Activated T-helper 2 cell treated with anti-CD3 and anti-CD28 coated beads, Interferon-gamma antibody, Interleukin-2, Interleukin-4, amounts not matched to agents 10 μg/mL and 5 μg/mL and 100 μg/mL, durations not matched to agents 14 hours and 24 hours and 36 hours (primary cell): ENCODE measurements at regions of chr3 and their contacts with region 1.

Region 1: GRCh38 chr3:15636003-15636709 is 34.6 kb downstream of the BTD start:
- DNase-seq: no peak
- H3K4me3 Mint-ChIP-seq: peak overlapping the region; percentile 56
- H3K27ac Mint-ChIP-seq: peak overlapping the region; percentile 87
- H3K4me1 Mint-ChIP-seq: peaks cover 59% of the 10 kb centered on the region
- H3K27me3 Mint-ChIP-seq: no peaks in the 10 kb centered on the region

Region 2: DNA sequence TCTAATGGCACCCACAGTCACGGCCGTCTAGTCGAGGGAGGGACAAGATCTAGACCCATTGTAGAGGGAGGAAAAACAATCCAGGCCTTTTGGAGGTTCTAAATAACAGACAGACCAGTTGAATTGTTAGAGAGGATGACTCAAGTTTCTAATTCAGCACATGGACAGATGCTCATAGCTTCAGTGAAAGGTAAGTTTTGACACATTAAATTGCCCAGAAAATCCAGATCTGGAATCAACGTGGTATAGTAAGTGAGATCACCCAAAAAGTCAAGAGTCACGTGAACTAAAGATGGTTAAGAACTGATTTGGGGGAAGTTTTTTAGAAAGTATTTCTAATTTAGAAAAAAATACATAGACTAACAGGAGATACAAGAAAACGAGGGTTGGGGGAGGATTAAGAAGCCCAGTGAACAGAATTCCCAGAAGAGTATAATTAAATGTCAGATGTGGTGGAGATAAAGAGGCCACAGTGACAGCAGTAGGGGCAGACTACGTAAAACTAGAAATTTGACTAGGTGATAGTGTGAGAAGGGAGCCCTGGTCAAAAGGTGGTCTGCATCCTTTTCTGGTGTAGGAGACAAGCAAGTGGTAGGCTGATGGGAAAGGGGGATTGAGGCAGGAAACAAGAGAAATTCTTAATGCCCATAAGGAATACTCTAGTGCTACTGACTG is 383.0 kb before region 1 on chr3:
- intact Hi-C with region 1: no loop called
- DNase-seq: no peak
- H3K4me3 Mint-ChIP-seq: no peak overlapping the region
- H3K27ac Mint-ChIP-seq: peak overlapping the region; percentile 76
- H3K4me1 Mint-ChIP-seq: peaks cover 9% of the 10 kb centered on the region
- H3K27me3 Mint-ChIP-seq: no peaks in the 10 kb centered on the region

Region 3: GRCh38 chr3:15601397-15602145 is 34.6 kb before region 1 on chr3 and contains the starts of genes BTD and HACL1:
- intact Hi-C with region 1: loop called (anchors 2 kb)
- DNase-seq: peak; percentile 99
- H3K4me3 Mint-ChIP-seq: peak within 1 kb of the TSS; percentile 100
- H3K27ac Mint-ChIP-seq: peak within 1 kb of the TSS; percentile 99
- H3K4me1 Mint-ChIP-seq: peaks cover 28% of the 10 kb centered on the region
- H3K27me3 Mint-ChIP-seq: no peaks in the 10 kb centered on the region
- total RNA-seq, gene BTD: 3.9 and 4.8 TPM in 2 replicates
- total RNA-seq, gene HACL1: 22.8 TPM in 2 replicates

Region 4: DNA sequence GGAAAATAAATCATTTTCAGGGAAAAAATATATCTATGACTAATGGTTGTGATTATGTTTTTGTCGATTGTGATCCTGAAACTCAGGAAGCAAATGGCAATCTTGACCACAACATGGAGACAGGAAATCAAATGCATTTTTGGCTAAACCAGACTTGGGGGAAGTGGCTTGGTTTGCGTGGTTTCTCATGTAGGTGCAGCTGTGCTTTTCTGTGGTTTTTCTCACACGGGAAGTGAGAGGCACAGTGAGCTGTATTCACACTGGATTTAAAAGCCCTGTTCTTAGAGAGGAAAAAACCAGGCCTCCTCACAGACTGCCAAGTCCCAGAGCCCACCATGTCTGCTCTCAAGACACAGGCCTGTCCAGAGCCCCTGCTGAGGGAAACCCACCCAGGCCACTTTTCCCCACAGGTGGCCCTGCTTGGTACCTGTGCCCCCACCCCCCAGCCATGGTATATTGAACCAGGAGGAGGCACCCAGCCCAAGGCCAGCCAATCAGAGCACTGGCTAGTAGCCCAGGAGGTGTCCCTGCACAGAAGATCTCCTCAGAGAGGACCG is 11.5 kb after region 1 on chr3:
- intact Hi-C with region 1: loop called (anchors 1 kb)
- DNase-seq: peak; percentile 62
- H3K4me3 Mint-ChIP-seq: peak overlapping the region; percentile 52
- H3K27ac Mint-ChIP-seq: peak overlapping the region; percentile 73
- H3K4me1 Mint-ChIP-seq: peaks cover 44% of the 10 kb centered on the region
- H3K27me3 Mint-ChIP-seq: no peaks in the 10 kb centered on the region

Region 5: DNA sequence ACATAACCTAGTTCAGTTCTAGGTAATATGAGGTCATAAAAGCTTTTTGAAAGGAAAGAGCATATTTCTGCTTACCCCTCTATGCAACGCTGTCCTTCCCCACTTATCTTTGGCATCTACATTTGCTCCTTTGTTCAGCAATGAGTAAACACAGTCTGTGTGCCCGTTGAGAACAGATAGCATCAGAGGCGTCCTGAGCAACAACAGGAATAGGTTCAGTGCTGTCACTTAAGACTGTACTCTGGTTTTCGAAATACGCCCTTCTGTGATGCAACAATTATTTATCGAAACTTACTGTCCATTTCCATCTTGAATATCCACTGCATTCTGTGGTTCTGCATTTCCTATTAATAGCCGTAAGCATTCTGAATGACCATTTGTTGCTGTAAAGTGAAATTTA is 49.8 kb after region 1 on chr3:
- intact Hi-C with region 1: loop called (anchors 2 kb)
- DNase-seq: peak; percentile 20
- H3K4me3 Mint-ChIP-seq: no peak overlapping the region
- H3K27ac Mint-ChIP-seq: no peak overlapping the region
- H3K4me1 Mint-ChIP-seq: peaks cover 35% of the 10 kb centered on the region
- H3K27me3 Mint-ChIP-seq: no peaks in the 10 kb centered on the region

Region 6: DNA sequence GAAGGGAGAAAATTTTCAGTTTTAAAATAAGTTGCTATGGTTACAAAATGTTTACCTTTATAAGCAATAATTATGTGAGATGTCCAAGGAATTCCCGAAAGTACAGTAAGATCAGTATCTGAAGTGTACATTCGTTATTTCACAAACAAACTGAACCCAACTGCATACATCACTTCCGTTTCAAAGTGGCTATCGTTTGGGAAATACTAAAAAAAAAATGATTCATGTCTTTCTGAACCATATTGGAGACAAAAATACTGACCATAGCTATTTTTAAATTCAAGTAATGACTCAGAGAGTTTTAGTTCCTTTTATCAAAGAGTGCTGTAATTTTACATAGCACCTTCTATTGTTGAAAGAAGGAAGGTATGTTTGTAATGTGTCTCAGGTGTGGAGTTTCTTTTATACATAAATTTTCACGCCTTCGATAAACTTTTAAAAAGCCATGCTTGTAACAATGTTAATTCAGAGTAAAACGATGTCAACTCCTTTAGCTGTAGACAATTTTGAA is 169.7 kb after region 1 on chr3:
- intact Hi-C with region 1: loop called (anchors 2 kb)
- DNase-seq: no peak
- H3K4me3 Mint-ChIP-seq: no peak overlapping the region
- H3K27ac Mint-ChIP-seq: peak overlapping the region; percentile 73
- H3K4me1 Mint-ChIP-seq: peaks cover 77% of the 10 kb centered on the region
- H3K27me3 Mint-ChIP-seq: no peaks in the 10 kb centered on the region

Region 7: DNA sequence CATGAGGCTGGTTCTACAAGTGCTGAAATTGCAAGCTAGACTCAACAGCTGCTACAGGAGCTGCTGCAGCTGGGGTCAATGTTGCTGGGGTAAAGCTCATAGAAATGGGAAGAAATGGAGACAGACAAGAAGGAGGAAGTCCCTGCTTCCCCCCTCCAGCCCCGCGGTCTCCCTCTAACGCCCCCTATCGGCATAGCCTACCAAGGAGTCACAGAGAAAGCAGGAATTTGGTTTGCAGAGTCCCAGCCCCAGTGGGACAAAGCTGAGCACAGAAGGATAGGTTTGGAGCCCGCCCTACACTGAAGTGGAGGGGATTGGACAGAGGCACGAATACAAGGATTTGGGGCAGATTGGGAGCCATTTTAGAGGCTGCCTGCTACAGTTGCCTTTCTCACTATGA is 338.5 kb after region 1 on chr3:
- intact Hi-C with region 1: no loop called
- DNase-seq: no peak
- H3K4me3 Mint-ChIP-seq: no peak overlapping the region
- H3K27ac Mint-ChIP-seq: no peak overlapping the region
- H3K4me1 Mint-ChIP-seq: no peaks in the 10 kb centered on the region
- H3K27me3 Mint-ChIP-seq: no peaks in the 10 kb centered on the region